BJ (cell line): ENCODE measurements at regions of chr9 and their contacts with region 1.

Region 1: DNA sequence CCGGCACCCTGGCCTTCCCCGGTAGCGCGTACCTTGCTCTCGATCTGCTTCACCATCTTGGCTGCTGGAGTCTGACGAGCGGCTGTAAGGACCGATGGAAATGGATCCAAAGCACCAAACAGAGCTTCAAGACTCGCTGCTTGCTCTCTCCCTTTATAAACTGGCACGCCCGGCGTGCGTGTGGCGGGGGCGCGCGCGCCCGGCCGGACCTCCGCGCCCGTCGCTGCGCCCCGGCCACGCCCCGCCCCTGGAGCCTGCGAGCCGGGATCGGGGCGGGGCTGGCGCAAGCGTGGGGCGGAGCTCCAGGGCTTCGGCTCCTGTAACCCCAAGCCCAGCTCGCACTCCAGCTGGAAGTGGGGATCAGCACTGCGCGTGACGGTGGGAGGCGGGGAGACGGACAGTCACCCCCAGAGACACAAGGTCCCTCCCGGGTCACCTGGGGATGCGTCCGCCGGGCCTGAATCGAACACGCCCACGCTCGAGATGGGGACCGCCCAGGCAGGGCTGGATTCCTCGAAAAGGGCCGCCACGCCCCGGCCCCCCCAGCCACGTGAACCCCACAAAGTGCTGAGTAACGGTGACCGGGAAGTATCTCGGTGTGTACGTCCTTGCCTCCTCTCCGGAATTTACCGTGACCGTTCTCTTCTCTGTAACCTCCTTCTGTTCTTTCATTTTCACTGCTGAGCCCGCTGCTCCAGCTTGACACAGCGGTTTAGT is at the start of gene TXN:
- DNase-seq: peak; percentile 60
- H3K4me3 ChIP-seq: peak within 1 kb of the TSS; percentile 90
- H3K27me3 ChIP-seq: no peaks in the 10 kb centered on the region
- CTCF ChIP-seq: no peak
- polyA plus RNA-seq, gene TXN: 290 and 475 TPM in 2 replicates

Region 2: GRCh38 chr9:110241260-110241857 is 15.2 kb before region 1 on chr9:
- CTCF ChIA-PET with region 1: no interaction called
- POLR2A ChIA-PET with region 1: interaction called, 17 read pairs
- DNase-seq: no peak
- H3K4me3 ChIP-seq: no peak overlapping the region
- H3K27me3 ChIP-seq: no peaks in the 10 kb centered on the region
- CTCF ChIP-seq: no peak

Region 3: DNA sequence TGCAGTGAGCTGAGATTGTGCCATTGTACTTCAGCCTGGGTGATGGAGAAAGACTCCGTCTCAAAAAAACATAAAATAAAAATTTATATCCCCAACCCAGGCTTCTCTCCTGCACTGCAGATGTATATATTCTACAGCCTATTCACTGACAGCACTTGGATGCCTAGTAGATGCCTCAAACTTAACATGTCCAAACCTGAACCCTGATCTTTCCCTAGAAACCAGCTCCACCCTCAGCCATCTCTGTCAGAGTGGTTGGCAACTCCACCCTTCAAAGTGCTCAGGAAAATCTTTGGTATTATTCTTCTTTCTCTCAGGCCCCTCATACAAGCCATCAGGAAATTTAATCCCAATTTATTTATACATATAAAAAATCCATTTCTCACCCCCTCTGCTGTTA is 36.7 kb after region 1 on chr9:
- CTCF ChIA-PET with region 1: no interaction called
- POLR2A ChIA-PET with region 1: interaction called, 11 read pairs
- DNase-seq: no peak
- H3K4me3 ChIP-seq: no peak overlapping the region
- H3K27me3 ChIP-seq: peaks cover 2% of the 10 kb centered on the region
- CTCF ChIP-seq: no peak

Region 4: DNA sequence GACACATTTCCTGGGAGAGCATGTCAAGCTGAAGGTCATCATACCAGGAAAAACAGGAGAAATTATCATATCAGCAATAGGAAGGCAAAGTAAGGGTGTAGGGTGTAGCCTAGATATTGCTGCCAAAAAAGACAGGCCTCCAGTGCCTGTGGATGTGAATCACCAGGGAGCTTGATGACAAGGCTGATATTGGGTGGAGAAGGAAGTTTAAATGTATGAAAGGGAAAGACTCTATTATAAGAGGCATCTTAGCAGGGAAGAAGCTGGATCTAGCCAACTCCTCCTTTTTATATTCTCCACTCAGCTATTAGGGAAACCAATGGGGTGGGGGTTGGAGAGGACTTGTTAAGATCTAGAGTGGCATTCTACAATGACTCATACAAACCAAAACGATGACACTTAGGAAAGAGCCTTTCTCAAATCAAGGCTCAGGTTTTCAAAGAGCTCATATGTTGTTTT is 94.5 kb after region 1 on chr9:
- CTCF ChIA-PET with region 1: interaction called, 3 read pairs
- POLR2A ChIA-PET with region 1: interaction called, 17 read pairs
- DNase-seq: peak; percentile 85
- H3K4me3 ChIP-seq: no peak overlapping the region
- H3K27me3 ChIP-seq: no peaks in the 10 kb centered on the region
- CTCF ChIP-seq: no peak

Region 5: GRCh38 chr9:110520120-110520701 is 263.7 kb after region 1 on chr9:
- CTCF ChIA-PET with region 1: no interaction called
- POLR2A ChIA-PET with region 1: no interaction called
- DNase-seq: no peak
- H3K4me3 ChIP-seq: no peak overlapping the region
- H3K27me3 ChIP-seq: no peaks in the 10 kb centered on the region
- CTCF ChIP-seq: no peak